ENCODE measurements at regions of chr6 and their contacts with region 1.

Region 1: DNA sequence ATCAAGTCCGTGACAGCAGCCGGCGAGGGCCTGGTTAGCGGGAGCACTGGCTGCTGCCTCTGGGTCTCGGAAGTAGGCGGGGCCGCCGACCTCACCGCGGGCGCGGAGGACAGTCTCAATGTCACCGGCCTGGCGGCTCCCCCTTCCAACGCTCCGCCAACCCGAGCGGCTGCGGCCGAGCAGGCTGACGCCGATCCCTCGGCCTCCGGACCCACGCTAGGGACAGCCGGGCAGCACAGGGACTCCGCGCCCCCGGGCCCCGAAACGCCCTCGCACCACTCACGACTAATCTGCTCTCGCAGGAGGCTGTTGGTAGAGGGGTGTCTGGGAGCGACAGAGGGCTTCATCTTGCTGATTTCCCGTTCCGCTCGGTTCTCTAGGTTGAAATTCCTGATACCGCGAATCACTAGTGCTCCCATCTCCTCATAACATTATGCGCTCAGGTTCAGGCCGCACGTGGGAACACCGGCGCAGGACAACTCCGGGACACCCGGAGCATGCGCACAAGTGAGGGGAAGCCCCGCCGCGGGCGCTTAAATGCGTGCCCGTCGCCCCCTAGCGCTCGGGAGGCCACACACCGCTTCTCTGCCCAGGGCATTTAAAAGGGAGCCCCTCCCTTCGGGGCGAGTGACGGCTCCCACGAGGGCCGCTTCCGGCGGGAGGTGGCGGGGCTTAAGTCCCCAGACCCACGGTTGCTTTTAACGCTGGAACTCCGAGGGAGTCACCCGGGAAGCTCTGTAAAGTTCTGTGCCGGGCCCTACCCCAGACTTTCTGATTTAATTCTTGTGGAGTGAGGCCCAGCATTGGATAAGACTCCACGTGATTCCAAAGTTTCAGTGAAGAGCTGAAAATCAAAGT is at the start of gene NDUFAF4:
- DNase-seq: peak; percentile 96
- H3K4me3 ChIP-seq: peak within 1 kb of the TSS; percentile 97
- H3K27ac ChIP-seq: peak within 1 kb of the TSS; percentile 77
- H3K4me1 ChIP-seq: peaks cover 33% of the 10 kb centered on the region
- CTCF ChIP-seq: peak; percentile 88
- total RNA-seq, gene NDUFAF4: 29.3 and 31.5 TPM in 2 replicates

Region 2: DNA sequence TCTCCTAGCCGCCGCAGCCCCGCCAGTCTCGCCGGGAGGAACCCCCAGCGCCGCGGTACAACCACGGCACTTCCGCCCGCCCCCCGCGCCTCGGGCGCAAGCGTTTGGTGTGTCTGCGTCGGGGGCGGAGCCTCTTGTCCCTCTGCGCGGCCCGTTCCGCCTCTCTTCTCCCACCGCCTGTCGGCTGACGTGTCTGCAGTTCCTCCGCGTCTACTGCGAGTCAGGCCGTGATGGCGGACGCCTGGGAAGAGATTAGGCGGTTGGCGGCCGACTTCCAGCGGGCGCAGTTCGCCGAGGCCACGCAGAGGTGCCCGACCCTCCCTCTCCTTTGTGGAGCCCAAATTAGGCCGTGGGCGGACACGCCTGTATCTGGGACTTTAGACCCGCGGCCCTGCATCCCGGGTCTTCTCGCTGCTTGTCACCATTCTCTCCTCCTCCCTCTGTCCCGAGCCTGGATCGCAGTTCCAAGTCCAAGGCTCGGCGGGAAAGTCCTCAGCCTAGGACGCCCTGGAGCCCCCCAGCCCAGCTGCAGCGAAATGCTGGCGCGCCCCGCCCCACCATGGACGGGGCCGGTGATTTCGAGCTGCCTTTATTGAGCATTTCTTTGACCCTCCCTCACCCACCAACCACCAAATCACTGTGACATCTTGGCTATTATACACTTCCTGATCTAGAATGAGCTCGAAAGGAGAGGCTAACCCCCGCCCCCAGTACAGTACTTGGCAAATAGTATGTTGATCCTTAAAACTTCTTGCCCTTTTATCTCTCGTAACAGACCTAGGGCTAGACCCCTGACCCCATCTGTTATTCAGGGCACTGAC is 375.8 kb before region 1 on chr6 and contains the start of gene UFL1:
- CTCF ChIA-PET with region 1: no interaction called
- POLR2A ChIA-PET with region 1: interaction called, 4 read pairs
- intact Hi-C with region 1: loop called (anchors 2 kb)
- DNase-seq: peak; percentile 95
- H3K4me3 ChIP-seq: peak within 1 kb of the TSS; percentile 90
- H3K27ac ChIP-seq: peak within 1 kb of the TSS; percentile 84
- H3K4me1 ChIP-seq: peaks cover 24% of the 10 kb centered on the region
- CTCF ChIP-seq: no peak
- total RNA-seq, gene UFL1: 14.1 and 15.5 TPM in 2 replicates

Region 3: GRCh38 chr6:96626759-96627364 is 270.8 kb before region 1 on chr6:
- CTCF ChIA-PET with region 1: no interaction called
- POLR2A ChIA-PET with region 1: no interaction called
- intact Hi-C with region 1: loop called (anchors 2 kb)
- DNase-seq: peak; percentile 66
- H3K4me3 ChIP-seq: no peak overlapping the region
- H3K27ac ChIP-seq: no peak overlapping the region
- H3K4me1 ChIP-seq: peaks cover 19% of the 10 kb centered on the region
- CTCF ChIP-seq: peak; percentile 83

Region 4: DNA sequence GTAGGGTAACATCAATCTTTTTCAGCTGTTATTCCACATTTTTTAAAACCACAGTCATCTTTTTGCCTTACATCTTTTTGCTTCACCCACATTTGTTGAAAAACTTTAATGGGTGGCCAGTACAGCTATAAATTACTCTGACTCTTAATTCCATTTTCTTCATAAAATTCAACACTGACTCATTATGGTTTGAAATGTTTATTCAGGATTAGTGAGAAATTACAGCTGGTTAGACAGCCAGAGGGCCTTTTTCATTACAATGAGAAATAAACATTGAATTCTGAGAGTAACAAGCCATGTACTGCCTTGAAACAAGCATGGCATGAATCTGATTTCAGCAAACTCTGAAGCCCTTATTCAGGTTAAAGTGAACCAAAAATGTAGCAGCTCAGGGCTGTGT is 19.5 kb before region 1 on chr6:
- CTCF ChIA-PET with region 1: no interaction called
- POLR2A ChIA-PET with region 1: interaction called, 13 read pairs
- intact Hi-C with region 1: no loop called
- DNase-seq: no peak
- H3K4me3 ChIP-seq: no peak overlapping the region
- H3K27ac ChIP-seq: no peak overlapping the region
- H3K4me1 ChIP-seq: no peaks in the 10 kb centered on the region
- CTCF ChIP-seq: no peak

Region 5: GRCh38 chr6:97053643-97054411 is 156.2 kb after region 1 on chr6:
- CTCF ChIA-PET with region 1: interaction called, 4 read pairs
- POLR2A ChIA-PET with region 1: interaction called, 5 read pairs
- intact Hi-C with region 1: loop called (anchors 1 kb)
- DNase-seq: peak; percentile 23
- H3K4me3 ChIP-seq: no peak overlapping the region
- H3K27ac ChIP-seq: no peak overlapping the region
- H3K4me1 ChIP-seq: peaks cover 52% of the 10 kb centered on the region
- CTCF ChIP-seq: peak; percentile 95